ENCODE measurements at regions of chr11 and their contacts with region 1.

Region 1: GRCh38 chr11:8263769-8264410 is at the start of gene LMO1:
- DNase-seq: peak in 1 of 2 experiments; percentile 94
- H3K4me3 ChIP-seq: peak within 1 kb of the TSS; percentile 44 to 65 (median 58)
- H3K27ac ChIP-seq: no peak within 1 kb of the TSS
- H3K4me1 ChIP-seq: peaks cover 0 to 10% (median 8%) of the 10 kb centered on the region in 4 experiments; a peak in 6 of 7 replicates
- H3K27me3 ChIP-seq: peaks cover 50 to 85% (median 78%) of the 10 kb centered on the region in 4 experiments
- CTCF ChIP-seq: peak; percentile 86 to 93 (median 86)
- EP300 ChIP-seq: no peak
- POLR2A ChIP-seq: no peak
- RAD21 ChIP-seq: peak; percentile 74 to 82
- total RNA-seq, gene LMO1: not detected in 2 replicates

Region 2: GRCh38 chr11:8233691-8234424 is 30.0 kb before region 1 on chr11:
- CTCF ChIA-PET with region 1: interaction called, 106 read pairs
- POLR2A ChIA-PET with region 1: interaction called, 3 read pairs
- DNase-seq: no peak
- H3K4me3 ChIP-seq: no peak overlapping the region
- H3K27ac ChIP-seq: no peak overlapping the region
- H3K4me1 ChIP-seq: no peaks in the 10 kb centered on the region; a peak in 3 of 7 replicates
- H3K27me3 ChIP-seq: no peaks in the 10 kb centered on the region
- CTCF ChIP-seq: no peak
- EP300 ChIP-seq: no peak
- POLR2A ChIP-seq: no peak
- RAD21 ChIP-seq: no peak

Region 3: GRCh38 chr11:8277691-8278090 is 13.8 kb after region 1 on chr11:
- CTCF ChIA-PET with region 1: interaction called, 59 read pairs
- POLR2A ChIA-PET with region 1: interaction called, 3 read pairs
- DNase-seq: no peak
- H3K4me3 ChIP-seq: no peak overlapping the region
- H3K27ac ChIP-seq: no peak overlapping the region
- H3K4me1 ChIP-seq: peaks cover 0 to 7% (median 1%) of the 10 kb centered on the region in 4 experiments; a peak in 4 of 7 replicates
- H3K27me3 ChIP-seq: peaks cover 0 to 10% (median 0%) of the 10 kb centered on the region in 4 experiments; a peak in 4 of 7 replicates
- CTCF ChIP-seq: no peak
- EP300 ChIP-seq: no peak
- POLR2A ChIP-seq: no peak
- RAD21 ChIP-seq: no peak

Region 4: DNA sequence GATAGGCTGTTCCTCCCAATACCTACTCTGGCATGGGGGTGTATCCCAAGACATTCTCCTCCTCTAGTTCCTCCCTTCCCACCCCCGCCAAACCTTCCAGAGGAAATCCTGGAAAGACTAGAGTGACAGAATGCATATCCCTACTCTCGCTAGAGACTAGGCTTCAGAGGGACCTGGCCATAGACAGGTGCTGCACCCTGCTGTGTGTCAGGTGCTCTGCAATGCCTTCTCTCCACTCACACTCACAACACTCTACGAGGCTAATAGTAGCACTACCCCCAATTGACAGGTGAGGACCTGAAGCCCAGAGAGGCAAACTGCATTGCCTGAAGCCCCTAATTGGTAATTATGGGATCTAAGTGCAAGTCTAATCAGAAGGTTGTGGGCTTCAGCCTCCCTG is 46.0 kb after region 1 on chr11:
- CTCF ChIA-PET with region 1: interaction called, 107 read pairs
- POLR2A ChIA-PET with region 1: no interaction called
- DNase-seq: no peak
- H3K4me3 ChIP-seq: no peak overlapping the region
- H3K27ac ChIP-seq: no peak overlapping the region
- H3K4me1 ChIP-seq: peaks cover 0 to 11% (median 3%) of the 10 kb centered on the region in 4 experiments; a peak in 2 of 7 replicates
- H3K27me3 ChIP-seq: no peaks in the 10 kb centered on the region; a peak in 1 of 7 replicates
- CTCF ChIP-seq: peak in 1 of 3 experiments; percentile 28; a peak in 2 of 4 replicates
- EP300 ChIP-seq: no peak
- POLR2A ChIP-seq: no peak
- RAD21 ChIP-seq: peak; percentile 28 to 44

Region 5: DNA sequence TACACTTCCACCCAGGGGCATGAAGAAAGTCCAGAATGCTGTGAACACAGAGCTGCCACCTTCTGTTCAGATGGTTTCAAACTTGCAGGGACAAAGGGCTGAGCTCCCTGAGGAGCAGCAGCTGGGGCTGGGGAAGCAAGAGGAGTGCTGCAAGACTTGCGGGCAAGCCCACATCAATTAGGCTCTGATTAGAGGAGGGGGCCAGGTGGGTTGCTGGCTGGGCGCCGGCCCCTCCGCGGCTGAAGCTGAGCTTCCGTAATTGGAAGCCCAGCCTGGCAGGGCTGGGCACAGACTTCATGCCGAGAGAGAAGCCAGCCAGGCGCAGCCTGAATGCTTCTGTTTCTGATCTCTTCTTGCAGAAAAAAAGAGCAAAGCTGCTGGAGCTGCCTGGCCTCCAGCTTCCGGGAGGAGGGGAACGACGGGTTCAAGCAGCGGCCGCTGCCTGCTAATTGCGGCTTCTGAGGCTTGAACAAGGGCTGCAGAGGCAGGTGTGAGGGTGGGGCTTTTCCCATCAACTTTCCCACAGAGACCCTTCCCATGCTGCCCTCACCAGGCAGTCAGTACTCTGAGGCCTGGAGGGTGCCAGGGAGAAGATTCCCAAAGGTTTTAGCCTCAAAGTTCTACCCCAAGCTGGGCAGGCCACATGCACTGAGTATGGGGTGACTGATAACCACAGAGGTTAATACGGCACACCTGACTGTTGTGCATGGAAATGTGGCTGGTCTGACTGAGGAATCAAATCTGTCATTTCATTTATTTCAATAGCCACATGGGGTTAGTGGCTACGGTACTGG is 90.9 kb after region 1 on chr11:
- CTCF ChIA-PET with region 1: interaction called, 15 read pairs
- POLR2A ChIA-PET with region 1: no interaction called
- DNase-seq: no peak
- H3K4me3 ChIP-seq: no peak overlapping the region
- H3K27ac ChIP-seq: no peak overlapping the region
- H3K4me1 ChIP-seq: no peaks in the 10 kb centered on the region; a peak in 2 of 7 replicates
- H3K27me3 ChIP-seq: no peaks in the 10 kb centered on the region; a peak in 2 of 7 replicates
- CTCF ChIP-seq: no peak
- EP300 ChIP-seq: no peak
- POLR2A ChIP-seq: no peak
- RAD21 ChIP-seq: no peak

Measured in H1 (cell line).